SK-N-SH (cell line): ENCODE measurements at regions of chr11 and their contacts with region 1.

Region 1: DNA sequence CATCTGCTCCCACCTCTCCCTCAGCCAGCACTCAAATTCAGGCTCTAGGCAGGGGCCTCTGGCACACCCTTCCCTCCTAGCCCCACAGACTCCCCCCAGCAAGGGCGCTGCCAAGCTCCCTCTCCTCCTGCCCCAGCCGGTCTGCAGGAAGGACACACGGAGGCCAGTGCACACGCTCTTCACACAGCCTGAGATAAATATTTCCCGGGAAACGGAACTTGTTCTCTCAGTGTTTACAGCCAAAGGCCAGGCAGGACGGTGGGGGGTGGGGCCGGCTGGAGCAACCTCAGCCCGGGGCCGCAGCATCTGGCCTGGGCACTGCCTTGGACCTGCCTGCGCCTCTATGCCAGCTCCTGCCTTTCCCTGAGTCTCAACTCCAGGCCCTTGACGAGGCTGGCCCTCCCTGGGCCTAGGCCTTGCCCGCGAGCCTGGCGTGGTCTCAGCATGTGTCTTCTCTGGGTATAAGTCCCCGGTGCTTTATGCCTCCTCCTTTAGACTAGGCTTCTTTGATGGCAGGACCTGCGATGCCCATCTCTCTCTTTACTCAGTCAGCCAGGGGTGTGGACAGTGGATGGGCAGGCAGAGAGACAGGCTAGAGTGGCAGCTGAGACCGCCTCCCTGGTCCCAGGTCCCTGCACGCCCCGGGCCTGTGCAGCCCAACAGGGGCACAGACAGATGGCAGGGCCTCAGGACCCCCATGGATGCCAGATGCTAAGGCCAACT is 48.4 kb downstream of the PDE2A start:
- DNase-seq: peak; percentile 84
- H3K4me3 ChIP-seq: no peak overlapping the region
- H3K27ac ChIP-seq: peak overlapping the region in 1 of 2 experiments; percentile 85; a peak in 2 of 4 replicates
- H3K4me1 ChIP-seq: peaks cover 0 to 69% of the 10 kb centered on the region in 2 experiments; a peak in 2 of 4 replicates
- H3K27me3 ChIP-seq: peaks cover 12% of the 10 kb centered on the region; the same call in 1 of the 2 replicates
- CTCF ChIP-seq: no peak
- EP300 ChIP-seq: peak in 1 of 2 experiments; percentile 42; a peak in 1 of 4 replicates
- RAD21 ChIP-seq: no peak

Region 2: GRCh38 chr11:72333661-72334060 is 292.2 kb before region 1 on chr11:
- CTCF ChIA-PET with region 1: no interaction called
- POLR2A ChIA-PET with region 1: no interaction called
- DNase-seq: peak; percentile 61
- H3K4me3 ChIP-seq: no peak overlapping the region
- H3K27ac ChIP-seq: peak overlapping the region; percentile 35 to 99; a peak in 3 of 4 replicates
- H3K4me1 ChIP-seq: peaks cover 32 to 75% of the 10 kb centered on the region in 2 experiments
- H3K27me3 ChIP-seq: no peaks in the 10 kb centered on the region
- CTCF ChIP-seq: peak; percentile 52
- EP300 ChIP-seq: peak in 1 of 2 experiments; percentile 59; a peak in 1 of 4 replicates
- RAD21 ChIP-seq: peak; percentile 73

Region 3: GRCh38 chr11:72637198-72637597 is 11.3 kb after region 1 on chr11:
- CTCF ChIA-PET with region 1: interaction called, 29 read pairs
- POLR2A ChIA-PET with region 1: interaction called, 11 read pairs
- DNase-seq: no peak
- H3K4me3 ChIP-seq: no peak overlapping the region
- H3K27ac ChIP-seq: no peak overlapping the region
- H3K4me1 ChIP-seq: peaks cover 0 to 64% of the 10 kb centered on the region in 2 experiments; a peak in 1 of 4 replicates
- H3K27me3 ChIP-seq: peaks cover 30% of the 10 kb centered on the region
- CTCF ChIP-seq: no peak
- EP300 ChIP-seq: no peak
- RAD21 ChIP-seq: no peak